ENCODE measurements at regions of chr6 and their contacts with region 1.

Region 1: DNA sequence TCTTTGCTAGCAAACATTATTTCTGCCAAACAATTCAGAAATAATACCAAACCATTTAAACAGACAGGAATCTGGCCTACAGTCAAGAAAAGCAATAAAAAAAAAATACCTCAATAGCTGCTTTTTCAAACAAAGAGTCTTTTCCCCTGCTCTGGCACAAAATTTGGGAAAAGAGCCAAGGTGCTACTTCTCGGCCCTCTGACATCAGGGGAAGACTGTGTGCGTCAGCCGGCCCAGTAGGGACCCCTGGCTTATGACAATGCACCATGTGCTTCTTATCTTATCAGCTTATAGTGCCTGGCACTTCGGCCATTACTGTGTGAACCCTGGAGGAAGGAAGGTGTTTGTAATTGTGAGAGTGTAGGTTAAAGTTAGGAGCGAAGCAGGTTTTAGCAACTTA is 89.4 kb downstream of the PDE10A start:
- DNase-seq: peak; percentile 25
- ATAC-seq: peak; percentile 46
- H3K4me3 ChIP-seq: peak overlapping the region in 1 of 2 experiments; percentile 16; a peak in 2 of 4 replicates
- H3K27ac ChIP-seq: peak overlapping the region; percentile 97
- H3K4me1 ChIP-seq: peaks cover 60% of the 10 kb centered on the region
- H3K27me3 ChIP-seq: no peaks in the 10 kb centered on the region
- CTCF ChIP-seq: no peak

Region 2: GRCh38 chr6:165181951-165182414 is 391.7 kb before region 1 on chr6:
- CTCF ChIA-PET with region 1: no interaction called
- POLR2A ChIA-PET with region 1: no interaction called
- in situ Hi-C with region 1: no loop called
- intact Hi-C with region 1: no loop called
- DNase-seq: no peak
- ATAC-seq: no peak
- H3K4me3 ChIP-seq: no peak overlapping the region
- H3K27ac ChIP-seq: no peak overlapping the region
- H3K4me1 ChIP-seq: no peaks in the 10 kb centered on the region
- H3K27me3 ChIP-seq: no peaks in the 10 kb centered on the region
- CTCF ChIP-seq: no peak

Region 3: DNA sequence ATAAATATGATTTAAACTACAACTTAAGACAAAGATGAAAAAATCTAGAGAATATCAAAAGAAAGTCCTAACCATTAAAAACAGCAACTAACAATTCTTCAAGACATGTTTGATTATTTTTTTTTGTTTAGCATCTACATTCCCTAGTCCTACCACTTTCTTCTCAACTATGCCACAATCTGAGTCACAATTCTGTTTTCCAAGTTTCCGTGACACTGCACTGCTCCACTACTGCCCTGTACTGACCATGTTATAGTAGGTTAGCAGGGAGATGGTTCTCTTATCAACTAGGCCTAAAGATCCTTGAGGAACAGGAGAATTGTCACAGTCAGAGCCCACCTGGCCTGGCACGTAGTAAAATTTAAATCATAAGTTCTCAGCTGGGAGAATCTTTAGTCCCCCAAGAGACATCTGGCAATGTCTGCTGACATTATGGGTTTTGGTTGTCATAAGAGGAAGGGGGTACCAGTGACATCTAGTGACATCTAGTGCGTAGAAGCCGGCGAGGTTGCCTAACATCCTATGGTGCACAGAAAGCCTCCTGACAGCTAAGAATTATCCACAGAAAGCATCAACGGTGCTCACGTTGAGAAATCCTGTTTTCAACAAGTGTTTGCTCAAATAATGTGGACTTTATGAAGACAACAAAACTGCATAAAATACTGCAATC is 11.1 kb before region 1 on chr6:
- CTCF ChIA-PET with region 1: no interaction called
- POLR2A ChIA-PET with region 1: interaction called, 16 read pairs
- in situ Hi-C with region 1: no loop called
- intact Hi-C with region 1: no loop called
- DNase-seq: no peak
- ATAC-seq: no peak; the same call in 1 of the 2 replicates
- H3K4me3 ChIP-seq: no peak overlapping the region
- H3K27ac ChIP-seq: peak overlapping the region; percentile 45; the same call in 1 of the 2 replicates
- H3K4me1 ChIP-seq: no peaks in the 10 kb centered on the region; the same call in 1 of the 2 replicates
- H3K27me3 ChIP-seq: no peaks in the 10 kb centered on the region
- CTCF ChIP-seq: peak; percentile 22

Region 4: DNA sequence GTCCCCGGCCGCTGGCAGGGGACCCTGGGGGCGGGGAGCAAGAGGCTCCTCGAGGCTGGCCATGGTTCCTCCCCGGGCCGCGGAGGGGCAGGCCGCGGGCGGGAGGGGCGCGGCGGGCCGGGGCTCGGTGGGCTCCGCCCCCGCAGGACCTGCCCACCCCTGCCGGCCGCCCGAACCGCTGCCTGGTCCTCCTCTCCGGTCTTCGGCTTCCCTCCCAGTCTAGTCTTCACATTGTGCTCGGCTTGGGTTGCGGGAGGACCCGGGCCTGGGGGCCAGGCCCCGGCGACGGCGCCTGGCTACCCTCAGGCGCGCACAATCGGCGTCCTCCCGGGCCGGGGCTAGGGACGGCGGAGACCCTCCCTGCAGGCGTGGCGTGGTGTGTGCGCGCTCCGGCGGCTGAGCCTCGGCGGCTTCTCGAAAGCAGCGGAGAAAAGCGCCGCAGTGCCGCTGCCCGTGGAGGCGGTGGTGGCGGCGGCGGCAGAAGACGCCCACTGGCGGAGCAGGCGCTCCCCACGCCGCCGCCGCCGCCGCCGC is 89.1 kb after region 1 on chr6 and contains the start of gene PDE10A:
- CTCF ChIA-PET with region 1: no interaction called
- POLR2A ChIA-PET with region 1: no interaction called
- in situ Hi-C with region 1: no loop called
- intact Hi-C with region 1: no loop called
- DNase-seq: no peak
- ATAC-seq: peak; percentile 77
- H3K4me3 ChIP-seq: peak within 1 kb of the TSS; percentile 75 to 91
- H3K27ac ChIP-seq: peak within 1 kb of the TSS; percentile 90
- H3K4me1 ChIP-seq: peaks cover 31% of the 10 kb centered on the region
- H3K27me3 ChIP-seq: no peaks in the 10 kb centered on the region
- CTCF ChIP-seq: no peak; the same call in 1 of the 2 replicates
- total RNA-seq, gene PDE10A: 27.8 TPM